ENCODE measurements at regions of chr6 and their contacts with region 1.

Region 1: GRCh38 chr6:158040051-158040803 is 58.6 kb downstream of the SYNJ2 start:
- DNase-seq: peak in 1 of 2 donors; percentile 38
- ATAC-seq: peak in 1 of 4 donors; percentile 11
- H3K4me3 ChIP-seq: no peak overlapping the region
- H3K27ac ChIP-seq: peak overlapping the region; percentile 98
- H3K4me1 ChIP-seq: peaks cover 53% of the 10 kb centered on the region
- H3K27me3 ChIP-seq: no peaks in the 10 kb centered on the region
- CTCF ChIP-seq: no peak

Region 2: DNA sequence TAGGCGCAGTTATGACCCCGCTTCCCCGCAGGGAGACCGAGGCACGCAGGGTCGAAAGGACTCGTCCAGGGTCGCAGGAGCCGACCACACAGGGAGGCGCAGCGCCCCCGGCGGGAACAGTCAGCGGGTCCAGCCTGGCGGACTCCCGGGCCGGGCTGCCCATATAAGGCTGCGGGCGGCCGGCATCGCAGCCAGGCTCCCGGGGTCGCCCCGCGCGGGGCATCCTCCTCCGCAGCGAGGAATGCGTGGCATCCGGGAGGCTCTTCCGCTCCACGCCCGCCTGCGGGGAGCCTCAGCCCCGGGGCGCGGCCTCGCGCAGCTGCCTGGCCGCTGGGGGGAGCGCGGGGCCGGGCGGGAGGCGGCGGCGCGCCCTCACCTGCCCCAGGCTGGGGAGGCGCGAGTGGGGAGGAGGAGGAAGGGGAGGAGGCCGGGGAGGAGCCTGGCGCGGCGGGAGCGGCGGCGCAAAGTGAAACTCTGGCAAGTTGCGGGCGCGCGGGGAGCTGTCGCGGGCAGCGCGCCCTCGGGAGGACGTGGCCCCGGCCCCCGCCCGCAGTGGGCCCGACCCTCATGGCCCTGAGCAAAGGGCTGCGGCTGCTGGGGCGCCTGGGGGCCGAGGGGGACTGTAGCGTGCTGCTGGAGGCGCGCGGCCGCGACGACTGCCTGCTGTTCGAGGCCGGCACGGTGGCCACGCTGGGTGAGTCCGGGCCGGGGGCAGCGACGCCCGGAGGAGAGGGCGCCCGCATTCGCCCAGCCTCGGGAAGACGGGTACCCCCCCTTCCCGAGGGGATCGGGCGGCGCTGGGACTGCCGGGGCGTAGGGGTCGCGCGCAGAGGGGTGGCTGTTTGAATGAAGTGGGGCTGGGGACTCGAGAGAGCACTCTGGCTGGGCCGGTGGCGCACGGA is 58.6 kb before region 1 on chr6 and contains the start of gene SYNJ2:
- intact Hi-C with region 1: loop called (anchors 5 kb)
- DNase-seq: peak; percentile 77 to 89
- ATAC-seq: peak; percentile 84 to 93 (median 90)
- H3K4me3 ChIP-seq: peak within 1 kb of the TSS; percentile 97
- H3K27ac ChIP-seq: peak within 1 kb of the TSS; percentile 71
- H3K4me1 ChIP-seq: peaks cover 10% of the 10 kb centered on the region
- H3K27me3 ChIP-seq: no peaks in the 10 kb centered on the region
- CTCF ChIP-seq: peak; percentile 49
- total RNA-seq, gene SYNJ2: 2.6 to 30.2 (median 12.4) TPM

Region 3: DNA sequence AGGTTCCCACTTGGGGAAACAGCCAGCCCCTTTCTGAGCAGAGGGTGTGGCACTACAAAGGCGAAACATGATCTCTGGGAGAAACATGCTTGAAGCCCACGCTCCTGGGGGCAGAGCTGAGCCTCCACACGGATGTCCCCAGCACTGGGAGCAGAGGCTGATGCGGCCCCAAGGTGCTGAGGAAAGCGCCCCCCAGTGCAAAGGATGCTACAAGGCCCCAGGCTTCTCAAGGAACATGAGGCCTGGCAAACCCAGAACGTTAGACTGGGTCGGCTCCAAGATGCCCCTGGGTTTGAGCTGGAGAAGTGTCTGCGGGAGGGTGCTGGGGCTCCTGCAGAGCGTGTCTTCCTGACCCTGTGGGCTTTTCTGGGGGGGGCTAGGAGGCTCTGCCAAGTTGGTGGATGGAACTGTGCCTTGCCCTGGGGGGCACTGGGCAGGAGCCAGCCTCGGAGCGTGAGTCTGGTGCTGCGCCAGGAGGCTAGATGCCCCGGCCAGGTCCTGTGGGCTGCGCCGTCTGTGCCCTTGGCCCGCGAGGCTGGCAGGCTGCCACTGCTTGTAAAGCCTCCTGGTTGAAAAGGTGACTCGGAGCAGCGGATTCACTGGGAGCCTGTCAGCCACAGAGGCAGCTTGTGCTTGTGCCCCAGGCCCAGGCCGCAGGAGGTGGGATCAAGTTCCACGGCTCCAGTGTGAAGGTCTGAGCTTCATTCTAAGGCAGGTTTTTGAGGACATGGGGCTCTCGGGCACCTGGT is 50.5 kb before region 1 on chr6:
- intact Hi-C with region 1: loop called (anchors 5 kb)
- DNase-seq: peak; percentile 78 to 86
- ATAC-seq: peak; percentile 83 to 86 (median 84)
- H3K4me3 ChIP-seq: no peak overlapping the region
- H3K27ac ChIP-seq: peak overlapping the region; percentile 58
- H3K4me1 ChIP-seq: peaks cover 29% of the 10 kb centered on the region
- H3K27me3 ChIP-seq: no peaks in the 10 kb centered on the region
- CTCF ChIP-seq: no peak

Measured in psoas muscle (tissue), 8 donors.